PC-3 (cell line): ENCODE measurements at regions of chr4 and their contacts with region 1.

Region 1: GRCh38 chr4:182404376-182404775 is 161.2 kb downstream of the TENM3 start:
- DNase-seq: no peak
- ATAC-seq: no peak
- H3K4me3 ChIP-seq: no peak overlapping the region
- H3K27ac ChIP-seq: no peak overlapping the region
- H3K4me1 ChIP-seq: no peaks in the 10 kb centered on the region
- H3K27me3 ChIP-seq: 0 out of 2 replicates have a peak, but pooled peaks cover 13% of the 10 kb centered on the region
- CTCF ChIP-seq: no peak

Region 2: DNA sequence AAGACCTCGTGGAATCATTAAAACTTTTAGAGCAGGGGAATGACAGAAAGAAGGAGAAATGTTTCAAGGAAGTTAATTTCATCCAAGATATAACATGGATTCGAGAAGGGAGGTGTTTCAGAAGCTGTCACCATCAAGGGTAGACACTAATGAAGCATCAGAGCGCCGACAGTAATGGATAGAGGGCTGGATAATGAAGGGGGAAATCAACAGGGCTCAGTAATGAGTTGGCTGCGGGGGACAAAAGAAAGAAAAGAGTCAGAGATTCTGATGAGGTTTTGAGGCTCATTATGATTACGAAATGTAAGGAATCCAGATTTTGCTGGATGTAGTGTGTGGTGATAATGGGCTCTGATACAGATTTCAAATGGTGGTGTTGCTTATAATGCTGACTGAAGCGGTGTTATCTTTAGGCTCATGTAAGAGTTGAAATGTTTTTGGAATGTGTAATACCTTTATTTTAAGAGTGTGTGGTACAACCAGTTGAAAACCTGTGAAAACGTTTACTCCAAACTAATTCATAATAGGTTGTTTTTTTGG is 200.4 kb before region 1 on chr4:
- CTCF ChIA-PET with region 1: interaction called, 18 read pairs
- POLR2A ChIA-PET with region 1: no interaction called
- intact Hi-C with region 1: no loop called
- DNase-seq: no peak
- ATAC-seq: no peak
- H3K4me3 ChIP-seq: no peak overlapping the region
- H3K27ac ChIP-seq: no peak overlapping the region
- H3K4me1 ChIP-seq: no peaks in the 10 kb centered on the region
- H3K27me3 ChIP-seq: peaks cover 7% of the 10 kb centered on the region; the same call in 1 of the 2 replicates
- CTCF ChIP-seq: no peak

Region 3: DNA sequence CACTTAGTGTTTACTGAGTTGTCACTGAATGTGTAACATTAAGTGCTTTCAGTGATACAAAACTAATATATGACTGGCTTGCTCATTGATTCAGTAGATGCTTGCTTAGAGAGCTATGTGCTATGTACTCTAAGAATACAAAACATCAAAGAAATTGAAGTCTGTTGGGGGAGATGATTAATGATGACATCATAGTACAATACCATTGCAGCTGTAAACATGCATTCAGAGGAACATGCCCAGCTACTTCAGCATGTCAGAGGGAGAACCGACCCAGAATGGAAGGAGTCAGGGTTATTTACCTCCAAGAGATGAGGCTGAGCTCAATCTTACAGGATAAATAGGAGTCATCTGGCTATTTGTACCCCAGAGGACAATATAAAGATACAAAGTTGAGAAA is 129.6 kb after region 1 on chr4:
- CTCF ChIA-PET with region 1: no interaction called
- POLR2A ChIA-PET with region 1: no interaction called
- intact Hi-C with region 1: no loop called
- DNase-seq: peak; percentile 56
- ATAC-seq: peak; percentile 70
- H3K4me3 ChIP-seq: no peak overlapping the region
- H3K27ac ChIP-seq: no peak overlapping the region
- H3K4me1 ChIP-seq: no peaks in the 10 kb centered on the region
- H3K27me3 ChIP-seq: no peaks in the 10 kb centered on the region
- CTCF ChIP-seq: no peak